ENCODE measurements at regions of chr19 and their contacts with region 1.

Region 1: GRCh38 chr19:41775360-41775695 is 20.0 kb downstream of the CEACAM6 start:
- DNase-seq: no peak
- H3K4me3 ChIP-seq: no peak overlapping the region
- H3K27ac ChIP-seq: no peak overlapping the region
- H3K4me1 ChIP-seq: no peaks in the 10 kb centered on the region
- H3K27me3 ChIP-seq: peaks cover 40% of the 10 kb centered on the region
- CTCF ChIP-seq: no peak
- EP300 ChIP-seq: no peak
- RAD21 ChIP-seq: no peak

Region 2: DNA sequence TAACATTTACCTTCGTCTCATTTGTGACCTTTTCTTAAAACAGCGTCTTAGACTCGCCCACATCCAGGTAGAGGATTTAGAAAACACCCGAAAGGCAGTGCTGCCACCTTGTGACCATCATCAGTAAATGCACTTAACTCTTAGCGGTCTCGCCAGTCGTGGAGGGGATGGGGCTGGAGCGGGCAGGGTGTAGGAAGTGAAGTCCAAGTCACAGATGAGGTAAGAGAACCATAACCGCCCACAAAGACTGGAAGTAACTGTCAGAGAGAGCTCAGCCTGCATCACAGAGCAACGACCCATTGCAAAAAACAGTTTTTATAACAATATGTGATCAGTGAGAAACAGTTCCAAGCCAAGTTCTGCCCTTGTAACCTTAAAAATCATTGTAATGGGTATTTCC is 10.3 kb after region 1 on chr19:
- CTCF ChIA-PET with region 1: interaction called, 13 read pairs
- POLR2A ChIA-PET with region 1: no interaction called
- DNase-seq: peak; percentile 76
- H3K4me3 ChIP-seq: no peak overlapping the region; a peak in 1 of 4 replicates
- H3K27ac ChIP-seq: no peak overlapping the region
- H3K4me1 ChIP-seq: no peaks in the 10 kb centered on the region
- H3K27me3 ChIP-seq: peaks cover 59% of the 10 kb centered on the region
- CTCF ChIP-seq: peak; percentile 87
- EP300 ChIP-seq: no peak
- RAD21 ChIP-seq: peak; percentile 52

Region 3: GRCh38 chr19:41928221-41928683 is 152.9 kb after region 1 on chr19 and contains the start of gene ERFL:
- CTCF ChIA-PET with region 1: no interaction called
- POLR2A ChIA-PET with region 1: no interaction called
- DNase-seq: peak; percentile 68
- H3K4me3 ChIP-seq: peak within 1 kb of the TSS; percentile 47 to 51
- H3K27ac ChIP-seq: no peak within 1 kb of the TSS
- H3K4me1 ChIP-seq: peaks cover 0 to 14% of the 10 kb centered on the region in 2 experiments; a peak in 2 of 4 replicates
- H3K27me3 ChIP-seq: peaks cover 24% of the 10 kb centered on the region
- CTCF ChIP-seq: no peak
- EP300 ChIP-seq: no peak
- RAD21 ChIP-seq: no peak
- polyA plus RNA-seq, gene ERFL: 0.03 and 0.07 TPM in 2 replicates

Measured in SK-N-SH (cell line).